GM10248 (cell line): ENCODE measurements at regions of chr16 and their contacts with region 1.

Region 1: GRCh38 chr16:89860747-89861304 is 12.6 kb upstream of the TCF25 start:
- DNase-seq: peak; percentile 93
- CTCF ChIP-seq: peak; percentile 99

Region 2: DNA sequence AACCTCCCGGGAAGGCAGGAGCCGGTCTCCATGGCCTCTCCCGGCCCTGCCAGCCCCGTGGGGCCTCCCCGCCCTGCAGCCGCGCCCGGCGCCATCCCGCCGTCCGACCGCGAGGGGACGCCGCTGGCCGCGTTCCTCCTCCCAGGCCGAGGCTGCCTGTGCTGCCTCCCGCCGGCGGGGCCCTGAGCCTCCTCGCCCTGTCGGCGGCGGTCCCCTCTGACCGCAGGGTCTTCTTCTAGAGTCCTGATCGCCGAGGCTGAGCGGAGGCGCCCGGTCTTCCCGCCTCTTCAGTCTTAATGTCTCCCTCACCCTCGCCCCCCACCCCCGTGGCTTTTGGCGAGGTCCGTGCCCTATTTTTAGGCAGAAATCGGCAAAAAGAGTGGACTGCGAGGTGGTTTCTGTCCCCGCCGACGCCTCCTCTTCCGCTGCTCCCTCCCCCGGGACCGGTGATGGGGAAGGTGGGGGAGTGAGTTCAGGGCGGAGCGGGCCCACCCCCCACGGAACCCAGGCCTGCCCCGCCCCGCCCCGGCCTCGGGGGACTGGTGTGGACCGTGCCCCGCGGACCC is 286.1 kb before region 1 on chr16:
- CTCF ChIA-PET with region 1: no interaction called
- POLR2A ChIA-PET with region 1: no interaction called
- DNase-seq: peak; percentile 91
- CTCF ChIP-seq: peak; percentile 94

Region 3: DNA sequence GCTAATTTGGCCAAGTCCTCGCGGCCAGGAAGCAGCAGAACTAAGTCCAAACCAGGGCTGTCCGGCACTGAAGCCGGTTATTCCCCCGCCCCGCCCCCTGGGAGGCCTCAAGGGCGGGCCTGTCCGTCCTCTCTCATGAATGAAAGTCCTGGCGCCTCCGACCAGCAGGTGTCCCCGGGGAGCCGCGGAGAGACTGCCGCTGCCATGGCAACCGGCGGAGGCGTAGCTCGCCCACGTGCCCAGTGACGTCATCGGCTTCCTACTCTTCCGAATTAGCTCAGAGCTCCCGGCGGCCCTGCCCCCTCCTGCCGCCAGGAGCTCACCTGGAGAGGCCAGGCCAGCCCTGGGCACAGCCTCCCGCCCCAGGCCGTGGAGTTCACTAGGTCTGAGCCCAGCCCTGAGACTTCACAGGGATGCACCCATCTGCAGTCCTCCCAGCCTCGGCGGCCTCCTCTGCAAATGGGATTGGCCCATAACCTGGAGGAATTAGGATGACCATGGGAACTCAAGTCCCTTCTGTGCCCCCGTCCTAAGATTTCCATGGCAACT is 160.7 kb before region 1 on chr16:
- CTCF ChIA-PET with region 1: interaction called, 80 read pairs
- POLR2A ChIA-PET with region 1: no interaction called
- DNase-seq: peak; percentile 96
- CTCF ChIP-seq: peak; percentile 73

Region 4: GRCh38 chr16:89711601-89712273 is 149.1 kb before region 1 on chr16:
- CTCF ChIA-PET with region 1: interaction called, 80 read pairs
- POLR2A ChIA-PET with region 1: no interaction called
- DNase-seq: peak; percentile 96
- CTCF ChIP-seq: no peak

Region 5: DNA sequence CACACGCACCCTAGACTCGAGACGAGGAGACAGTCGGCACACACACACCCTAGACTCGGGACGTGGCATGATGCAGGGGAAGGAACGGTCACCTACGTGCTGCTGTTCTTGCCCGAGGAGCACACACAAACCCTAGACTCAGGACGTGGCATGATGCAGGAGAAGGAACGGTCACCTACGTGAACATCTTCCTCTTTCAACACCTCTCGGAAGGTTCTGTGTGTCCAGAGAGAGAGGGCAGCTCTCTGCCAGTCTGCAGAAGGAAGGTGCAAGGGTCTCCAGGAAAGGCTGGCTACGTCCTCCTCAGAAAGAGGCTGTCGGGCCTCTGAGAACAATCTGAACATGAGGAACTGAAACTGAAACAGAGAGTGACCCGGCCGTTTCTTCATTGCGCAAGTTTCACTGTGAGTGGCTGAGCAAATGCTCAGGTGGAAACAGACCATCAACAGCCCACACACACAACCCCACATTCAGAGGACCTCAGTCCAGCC is 96.1 kb before region 1 on chr16:
- CTCF ChIA-PET with region 1: interaction called, 11 read pairs
- POLR2A ChIA-PET with region 1: interaction called, 4 read pairs
- DNase-seq: peak; percentile 86
- CTCF ChIP-seq: no peak

Region 6: GRCh38 chr16:89815639-89816348 is 45.0 kb before region 1 on chr16:
- CTCF ChIA-PET with region 1: interaction called, 17 read pairs
- POLR2A ChIA-PET with region 1: no interaction called
- DNase-seq: peak; percentile 52
- CTCF ChIP-seq: no peak

Region 7: DNA sequence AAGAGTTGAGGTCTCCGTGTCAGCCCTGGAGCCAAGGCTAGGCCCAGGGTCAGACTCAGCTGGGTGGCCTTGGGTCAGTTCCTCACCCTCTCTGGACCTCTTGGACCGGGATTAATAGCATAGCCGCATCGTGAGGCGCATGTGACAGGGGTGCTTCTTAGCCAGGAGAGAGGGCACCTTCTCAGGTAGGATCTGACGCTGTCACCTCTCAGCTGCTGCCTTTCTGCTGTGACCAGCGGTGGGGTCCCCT is 23.6 kb before region 1 on chr16:
- CTCF ChIA-PET with region 1: interaction called, 31 read pairs
- POLR2A ChIA-PET with region 1: no interaction called
- DNase-seq: no peak
- CTCF ChIP-seq: no peak

Region 8: GRCh38 chr16:89873972-89874689 is 13.3 kb after region 1 on chr16:
- CTCF ChIA-PET with region 1: interaction called, 67 read pairs
- POLR2A ChIA-PET with region 1: interaction called, 7 read pairs
- DNase-seq: peak; percentile 98
- CTCF ChIP-seq: no peak